Mammary epithelial cell (primary cell): ENCODE measurements at regions of chr1 and their contacts with region 1.

Region 1: DNA sequence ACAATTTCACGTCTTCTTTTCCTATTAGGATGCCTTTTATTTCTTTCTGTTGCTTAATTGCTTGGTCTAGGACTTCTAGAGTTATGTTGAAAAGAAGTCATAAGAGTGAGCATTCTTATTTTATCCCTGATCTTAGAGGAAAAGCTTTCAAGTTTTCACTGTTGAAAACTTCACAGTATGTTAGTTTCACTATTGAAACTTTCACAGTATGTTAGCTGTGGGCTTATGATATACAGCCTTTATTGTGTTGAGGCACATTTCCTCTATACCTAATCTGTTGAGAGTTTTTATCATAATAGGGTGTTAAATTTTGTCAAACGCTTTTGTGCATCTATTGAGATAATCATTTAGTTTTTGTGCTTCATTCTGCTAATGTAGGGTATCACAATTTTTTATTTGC is 227.1 kb downstream of the LHX8 start:
- DNase-seq: no peak
- H3K4me3 ChIP-seq: no peak overlapping the region
- H3K27ac ChIP-seq: no peak overlapping the region
- H3K4me1 ChIP-seq: no peaks in the 10 kb centered on the region
- H3K27me3 ChIP-seq: no peaks in the 10 kb centered on the region
- CTCF ChIP-seq: no peak

Region 2: GRCh38 chr1:75312620-75313019 is 48.6 kb before region 1 on chr1:
- CTCF ChIA-PET with region 1: no interaction called
- dilution Hi-C with region 1: no loop called
- in situ Hi-C with region 1: no loop called
- intact Hi-C with region 1: no loop called
- DNase-seq: no peak
- H3K4me3 ChIP-seq: no peak overlapping the region
- H3K27ac ChIP-seq: no peak overlapping the region
- H3K4me1 ChIP-seq: no peaks in the 10 kb centered on the region
- H3K27me3 ChIP-seq: peaks cover 1% of the 10 kb centered on the region
- CTCF ChIP-seq: no peak

Region 3: GRCh38 chr1:75328691-75329090 is 32.6 kb before region 1 on chr1:
- CTCF ChIA-PET with region 1: no interaction called
- dilution Hi-C with region 1: loop called (anchors 5 kb)
- in situ Hi-C with region 1: no loop called
- intact Hi-C with region 1: no loop called
- DNase-seq: no peak
- H3K4me3 ChIP-seq: no peak overlapping the region
- H3K27ac ChIP-seq: no peak overlapping the region
- H3K4me1 ChIP-seq: no peaks in the 10 kb centered on the region
- H3K27me3 ChIP-seq: no peaks in the 10 kb centered on the region
- CTCF ChIP-seq: no peak

Region 4: DNA sequence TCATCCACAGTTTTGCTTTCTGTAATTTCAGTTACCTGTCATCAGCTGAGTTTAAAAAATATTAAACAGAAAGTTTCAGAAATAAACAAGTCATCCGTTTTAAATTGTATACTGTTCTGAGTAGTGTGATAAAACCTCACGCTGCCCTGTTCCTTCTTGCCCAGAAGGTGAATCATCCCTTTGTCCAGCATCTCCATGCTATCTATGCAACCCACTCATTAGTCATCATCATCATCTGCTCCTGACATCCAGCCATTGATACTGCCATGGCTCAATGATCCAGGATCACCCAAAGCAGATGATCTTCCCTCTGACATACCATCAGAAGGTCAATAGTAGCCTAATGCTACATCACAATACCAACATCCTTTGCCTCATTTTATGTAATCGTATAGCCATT is 51.4 kb after region 1 on chr1:
- CTCF ChIA-PET with region 1: no interaction called
- dilution Hi-C with region 1: no loop called
- in situ Hi-C with region 1: no loop called
- intact Hi-C with region 1: no loop called
- DNase-seq: peak; percentile 59
- H3K4me3 ChIP-seq: no peak overlapping the region
- H3K27ac ChIP-seq: no peak overlapping the region
- H3K4me1 ChIP-seq: peaks cover 8% of the 10 kb centered on the region
- H3K27me3 ChIP-seq: no peaks in the 10 kb centered on the region
- CTCF ChIP-seq: no peak

Region 5: DNA sequence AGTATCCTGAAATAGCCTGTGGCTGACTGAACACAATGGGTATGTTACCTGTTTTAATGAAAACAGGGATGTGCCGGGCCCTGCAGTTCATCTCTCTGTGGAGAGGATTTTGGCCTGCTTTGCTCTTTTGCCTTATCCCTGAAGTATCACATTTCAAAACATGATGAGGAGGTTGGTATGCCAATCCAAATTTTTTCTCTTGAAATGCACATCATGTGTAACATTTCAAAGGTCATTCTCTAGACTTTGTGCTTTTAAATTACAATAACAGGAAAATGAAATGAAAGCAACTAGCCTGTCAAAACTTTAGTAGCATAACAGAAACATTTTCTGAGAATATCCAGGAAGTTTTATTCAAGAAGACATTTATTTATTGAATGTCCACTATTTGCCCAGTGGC is 130.8 kb after region 1 on chr1:
- CTCF ChIA-PET with region 1: no interaction called
- dilution Hi-C with region 1: no loop called
- in situ Hi-C with region 1: no loop called
- intact Hi-C with region 1: no loop called
- DNase-seq: no peak
- H3K4me3 ChIP-seq: no peak overlapping the region
- H3K27ac ChIP-seq: no peak overlapping the region
- H3K4me1 ChIP-seq: no peaks in the 10 kb centered on the region
- H3K27me3 ChIP-seq: no peaks in the 10 kb centered on the region
- CTCF ChIP-seq: no peak